Activated CD4-positive, alpha-beta T cell treated with anti-CD3 and anti-CD28 coated beads for 36 hours (primary cell): ENCODE measurements at regions of chr4 and their contacts with region 1.

Region 1: GRCh38 chr4:2468445-2469192 is at the start of gene RNF4:
- DNase-seq: peak; percentile 98
- ATAC-seq: peak; percentile 86
- H3K4me3 Mint-ChIP-seq: peak within 1 kb of the TSS; percentile 99
- H3K27ac Mint-ChIP-seq: peak within 1 kb of the TSS; percentile 93
- H3K4me1 Mint-ChIP-seq: peaks cover 42% of the 10 kb centered on the region
- H3K27me3 Mint-ChIP-seq: no peaks in the 10 kb centered on the region
- total RNA-seq, gene RNF4: 87.5 to 94.1 TPM

Region 2: DNA sequence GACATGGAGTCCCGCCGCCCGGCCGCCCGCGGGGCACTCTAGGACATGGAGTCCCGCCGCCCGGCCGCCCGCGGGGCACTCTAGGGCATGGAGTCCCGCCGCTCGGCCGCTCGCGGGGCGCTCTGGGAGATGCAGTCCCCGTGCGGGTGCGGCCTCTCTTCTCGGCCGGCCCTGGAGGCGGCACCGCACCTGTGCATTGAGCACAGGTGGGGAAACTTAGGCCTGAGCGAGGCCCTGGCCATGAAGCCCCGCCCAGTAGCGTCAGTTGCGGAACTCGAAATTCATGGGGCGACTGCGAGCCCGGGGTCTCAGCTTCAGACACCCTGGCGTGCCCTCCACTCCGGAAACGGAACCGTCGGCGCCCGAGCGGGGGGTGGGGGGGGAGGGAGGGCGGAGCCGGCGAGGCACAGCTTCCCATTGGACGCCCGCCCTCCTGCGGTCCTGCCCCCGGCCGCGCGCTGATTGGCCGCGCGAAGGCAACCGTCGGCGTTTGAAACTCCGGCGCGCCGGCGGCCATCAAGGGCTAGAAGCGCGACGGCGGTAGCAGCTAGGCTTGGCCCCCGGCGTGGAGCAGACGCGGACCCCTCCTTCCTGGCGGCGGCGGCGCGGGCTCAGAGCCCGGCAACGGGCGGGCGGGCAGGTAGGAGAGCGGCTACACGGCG is 747.5 kb before region 1 on chr4 and contains the starts of genes TACC3 and TMEM129:
- CTCF ChIA-PET with region 1: no interaction called
- POLR2A ChIA-PET with region 1: no interaction called
- intact Hi-C with region 1: loop called in 1 of 2 experiments (anchors 2 kb)
- DNase-seq: peak; percentile 96
- ATAC-seq: peak; percentile 81
- H3K4me3 Mint-ChIP-seq: peak within 1 kb of the TSS; percentile 96
- H3K27ac Mint-ChIP-seq: peak within 1 kb of the TSS; percentile 99
- H3K4me1 Mint-ChIP-seq: peaks cover 52% of the 10 kb centered on the region
- H3K27me3 Mint-ChIP-seq: no peaks in the 10 kb centered on the region
- total RNA-seq, gene TACC3: 197 to 206 TPM
- total RNA-seq, gene TMEM129: 13.7 to 14.6 TPM

Region 3: GRCh38 chr4:2041234-2042130 is 427.1 kb before region 1 on chr4:
- CTCF ChIA-PET with region 1: no interaction called
- POLR2A ChIA-PET with region 1: interaction called, 4 read pairs
- intact Hi-C with region 1: loop called in 1 of 2 experiments (anchors 1 kb)
- DNase-seq: peak; percentile 93
- ATAC-seq: peak; percentile 87
- H3K4me3 Mint-ChIP-seq: peak overlapping the region; percentile 70
- H3K27ac Mint-ChIP-seq: no peak overlapping the region
- H3K4me1 Mint-ChIP-seq: no peaks in the 10 kb centered on the region
- H3K27me3 Mint-ChIP-seq: peaks cover 15% of the 10 kb centered on the region

Region 4: DNA sequence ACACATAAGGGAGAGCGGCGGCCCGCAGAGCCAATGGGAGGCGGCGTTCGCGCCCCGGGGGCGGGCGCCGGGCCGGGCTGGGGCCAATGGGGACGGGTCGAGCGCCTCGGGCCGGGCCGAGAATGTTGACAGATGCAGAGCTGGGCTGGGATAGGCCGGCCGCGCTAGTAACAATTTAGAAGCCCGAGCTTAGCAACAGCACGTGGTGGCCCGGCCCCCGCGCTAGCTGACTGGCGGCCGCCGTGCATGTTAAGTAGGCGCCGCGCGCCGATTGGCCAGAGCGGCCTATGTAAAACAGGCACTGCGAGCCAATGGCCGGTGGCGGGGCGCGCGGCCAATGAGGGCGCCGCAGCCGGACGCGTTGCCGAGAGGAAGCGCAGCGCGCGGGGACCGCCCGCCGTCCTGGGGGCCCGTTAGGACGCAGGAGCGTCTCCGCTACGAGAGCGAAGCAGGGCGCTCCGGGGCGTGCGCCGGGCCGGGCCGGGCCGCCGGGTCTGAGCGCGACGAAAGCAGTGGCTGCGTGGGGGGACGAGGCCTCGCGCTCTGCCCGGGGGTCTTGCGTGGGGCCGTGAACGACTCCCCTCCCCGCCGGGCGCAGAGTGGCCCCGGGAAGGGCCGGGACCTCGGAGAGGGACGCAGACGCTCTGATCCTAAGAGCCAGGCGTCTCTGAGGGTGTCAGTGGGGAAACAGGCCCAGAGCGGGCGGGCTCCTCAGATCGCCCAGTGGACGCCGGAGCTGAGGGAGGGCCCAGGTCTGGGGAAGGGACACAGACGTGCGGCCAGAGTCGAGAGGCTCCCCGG is 206.3 kb before region 1 on chr4:
- CTCF ChIA-PET with region 1: interaction called, 3 read pairs
- POLR2A ChIA-PET with region 1: interaction called, 14 read pairs
- intact Hi-C with region 1: loop called (anchors 1 kb)
- DNase-seq: peak; percentile 99
- ATAC-seq: peak; percentile 96
- H3K4me3 Mint-ChIP-seq: peak overlapping the region; percentile 61
- H3K27ac Mint-ChIP-seq: no peak overlapping the region
- H3K4me1 Mint-ChIP-seq: peaks cover 2% of the 10 kb centered on the region
- H3K27me3 Mint-ChIP-seq: no peaks in the 10 kb centered on the region

Region 5: GRCh38 chr4:2484993-2485392 is 16.4 kb after region 1 on chr4:
- CTCF ChIA-PET with region 1: interaction called, 3 read pairs
- POLR2A ChIA-PET with region 1: interaction called, 6 read pairs
- intact Hi-C with region 1: loop called in 1 of 2 experiments (anchors 1 kb)
- DNase-seq: peak; percentile 79
- ATAC-seq: peak; percentile 83
- H3K4me3 Mint-ChIP-seq: peak overlapping the region; percentile 0
- H3K27ac Mint-ChIP-seq: peak overlapping the region; percentile 76
- H3K4me1 Mint-ChIP-seq: peaks cover 75% of the 10 kb centered on the region
- H3K27me3 Mint-ChIP-seq: no peaks in the 10 kb centered on the region

Region 6: GRCh38 chr4:2755837-2756694 is 287.4 kb after region 1 on chr4 and contains the start of gene TNIP2:
- CTCF ChIA-PET with region 1: interaction called, 3 read pairs
- POLR2A ChIA-PET with region 1: no interaction called
- intact Hi-C with region 1: loop called in 1 of 2 experiments (anchors 1 kb)
- DNase-seq: peak; percentile 91
- ATAC-seq: peak; percentile 78
- H3K4me3 Mint-ChIP-seq: peak within 1 kb of the TSS; percentile 79
- H3K27ac Mint-ChIP-seq: peak within 1 kb of the TSS; percentile 66
- H3K4me1 Mint-ChIP-seq: peaks cover 33% of the 10 kb centered on the region
- H3K27me3 Mint-ChIP-seq: no peaks in the 10 kb centered on the region
- total RNA-seq, gene TNIP2: 50.6 to 59.4 TPM

Region 7: DNA sequence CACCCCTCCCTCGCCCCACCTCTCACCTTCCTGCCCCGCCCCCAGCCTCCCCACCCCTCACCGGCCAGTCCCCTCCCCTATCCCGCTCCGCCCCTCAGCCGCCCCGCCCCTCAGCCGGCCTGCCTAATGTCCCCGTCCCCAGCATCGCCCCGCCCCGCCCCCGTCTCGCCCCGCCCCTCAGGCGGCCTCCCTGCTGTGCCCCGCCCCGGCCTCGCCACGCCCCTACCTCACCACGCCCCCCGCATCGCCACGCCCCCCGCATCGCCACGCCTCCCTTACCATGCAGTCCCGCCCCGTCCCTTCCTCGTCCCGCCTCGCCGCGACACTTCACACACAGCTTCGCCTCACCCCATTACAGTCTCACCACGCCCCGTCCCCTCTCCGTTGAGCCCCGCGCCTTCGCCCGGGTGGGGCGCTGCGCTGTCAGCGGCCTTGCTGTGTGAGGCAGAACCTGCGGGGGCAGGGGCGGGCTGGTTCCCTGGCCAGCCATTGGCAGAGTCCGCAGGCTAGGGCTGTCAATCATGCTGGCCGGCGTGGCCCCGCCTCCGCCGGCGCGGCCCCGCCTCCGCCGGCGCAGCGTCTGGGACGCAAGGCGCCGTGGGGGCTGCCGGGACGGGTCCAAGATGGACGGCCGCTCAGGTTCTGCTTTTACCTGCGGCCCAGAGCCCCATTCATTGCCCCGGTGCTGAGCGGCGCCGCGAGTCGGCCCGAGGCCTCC is 605.6 kb after region 1 on chr4 and contains the starts of genes HTT and HTT-AS:
- CTCF ChIA-PET with region 1: no interaction called
- POLR2A ChIA-PET with region 1: no interaction called
- intact Hi-C with region 1: loop called in 1 of 2 experiments (anchors 1 kb)
- DNase-seq: peak; percentile 100
- ATAC-seq: peak; percentile 89
- H3K4me3 Mint-ChIP-seq: peak within 1 kb of the TSS; percentile 95
- H3K27ac Mint-ChIP-seq: peak within 1 kb of the TSS; percentile 90
- H3K4me1 Mint-ChIP-seq: peaks cover 24% of the 10 kb centered on the region
- H3K27me3 Mint-ChIP-seq: no peaks in the 10 kb centered on the region
- total RNA-seq, gene HTT: 80.1 to 127 TPM
- total RNA-seq, gene HTT-AS: not detected